Activated T-helper 1 cell treated with anti-CD3 and anti-CD28 coated beads, Interleukin-12 subunit alpha, Interleukin-12 subunit beta, Interleukin-2, Interleukin-4 antibody, amounts not matched to agents 30 ng/mL and 10 ng/mL and 1 ng/mL, durations not matched to agents 14 hours and 24 hours and 36 hours (primary cell): ENCODE measurements at regions of chr10 and their contacts with region 1.

Region 1: DNA sequence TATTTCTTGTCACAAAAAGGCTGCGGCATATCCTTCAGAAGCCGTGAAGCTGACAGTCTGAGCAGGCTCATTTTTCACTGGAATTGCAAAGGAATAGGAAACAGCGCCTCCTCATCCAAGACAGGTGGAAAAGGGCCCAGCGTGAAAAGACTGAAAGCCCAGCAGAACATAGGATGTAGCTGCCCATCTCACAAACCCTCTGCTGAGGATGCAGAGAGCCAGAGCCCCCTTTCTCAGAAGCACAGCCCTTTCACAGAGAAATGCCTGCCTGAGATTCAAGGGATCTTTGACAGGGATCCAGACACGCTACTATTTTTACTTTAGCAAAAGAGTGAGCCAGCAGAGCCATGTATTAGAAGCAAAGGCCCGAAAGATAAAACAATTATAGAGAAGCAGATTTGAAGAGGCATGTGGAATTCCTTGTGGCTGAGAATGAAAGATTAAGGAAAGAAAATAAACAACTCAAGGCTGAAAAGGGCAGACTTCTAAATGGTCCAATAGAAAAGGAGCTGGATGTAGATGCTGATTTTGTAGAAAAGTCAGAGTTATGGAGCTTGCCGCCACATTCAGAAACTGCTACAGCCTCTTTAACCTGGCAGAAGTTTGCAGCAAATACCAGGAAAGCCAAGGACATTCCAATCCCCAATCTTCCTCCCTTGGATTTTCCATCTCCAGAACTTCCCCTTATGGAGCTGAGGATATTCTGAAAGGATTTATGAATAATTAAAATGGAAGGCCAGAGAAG is 36.9 kb downstream of the GDI2 start:
- DNase-seq: no peak
- H3K4me3 Mint-ChIP-seq: peak overlapping the region; percentile 58
- H3K27ac Mint-ChIP-seq: peak overlapping the region; percentile 91
- H3K4me1 Mint-ChIP-seq: peaks cover 44% of the 10 kb centered on the region
- H3K27me3 Mint-ChIP-seq: no peaks in the 10 kb centered on the region

Region 2: DNA sequence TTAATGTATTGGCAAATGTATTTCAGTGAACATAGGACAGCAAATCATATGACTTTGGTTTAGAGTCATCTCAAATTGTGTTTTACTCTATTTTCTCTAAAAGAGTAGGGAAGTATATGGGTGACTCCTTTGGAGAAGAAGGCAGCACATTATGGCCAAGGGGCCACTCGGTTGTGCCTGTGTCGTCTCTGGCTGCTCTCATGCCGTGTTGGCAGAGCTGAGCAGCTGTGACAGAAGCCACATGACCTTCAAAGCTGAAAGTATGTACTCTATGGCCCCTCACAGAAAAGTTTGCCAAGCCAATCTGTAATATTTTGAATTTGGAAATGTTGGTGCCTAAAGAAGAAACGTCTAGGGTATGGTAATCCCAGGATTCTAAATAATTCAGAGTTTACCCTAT is 44.2 kb before region 1 on chr10:
- intact Hi-C with region 1: loop called (anchors 5 kb)
- DNase-seq: no peak
- H3K4me3 Mint-ChIP-seq: no peak overlapping the region
- H3K27ac Mint-ChIP-seq: peak overlapping the region; percentile 46
- H3K4me1 Mint-ChIP-seq: peaks cover 43% of the 10 kb centered on the region
- H3K27me3 Mint-ChIP-seq: no peaks in the 10 kb centered on the region

Region 3: GRCh38 chr10:5758927-5759326 is 17.4 kb before region 1 on chr10:
- intact Hi-C with region 1: loop called (anchors 2 kb)
- DNase-seq: no peak
- H3K4me3 Mint-ChIP-seq: no peak overlapping the region
- H3K27ac Mint-ChIP-seq: no peak overlapping the region
- H3K4me1 Mint-ChIP-seq: peaks cover 2% of the 10 kb centered on the region
- H3K27me3 Mint-ChIP-seq: no peaks in the 10 kb centered on the region

Region 4: DNA sequence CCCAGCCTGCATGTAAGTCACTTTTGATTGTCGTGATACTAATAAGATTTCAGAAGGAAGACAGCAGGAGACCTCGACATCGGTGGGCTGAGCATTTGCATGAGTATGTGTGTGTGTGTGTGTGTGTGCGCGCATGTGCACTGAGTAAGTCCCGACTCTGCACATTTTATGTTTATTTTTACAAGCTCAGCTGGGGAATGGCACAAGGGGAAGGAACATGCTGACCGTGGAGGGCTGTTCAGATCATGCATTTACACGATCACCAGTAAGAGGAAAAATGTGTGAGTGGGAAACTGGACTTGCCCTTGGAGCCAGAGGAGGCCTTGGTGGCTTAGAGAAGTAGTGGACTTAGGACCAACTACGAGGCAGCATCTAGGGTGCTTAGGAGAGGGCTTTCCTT is 244.5 kb after region 1 on chr10:
- intact Hi-C with region 1: loop called (anchors 10 kb)
- DNase-seq: no peak
- H3K4me3 Mint-ChIP-seq: no peak overlapping the region
- H3K27ac Mint-ChIP-seq: peak overlapping the region; percentile 80
- H3K4me1 Mint-ChIP-seq: peaks cover 63% of the 10 kb centered on the region
- H3K27me3 Mint-ChIP-seq: no peaks in the 10 kb centered on the region